Activated naive CD4-positive, alpha-beta T cell treated with anti-CD3 and anti-CD28 coated beads, Interleukin-2, amount 10 ng/mL, durations not matched to agents 7 days and 5 days (primary cell): ENCODE measurements at regions of chr5 and their contacts with region 1.

Region 1: DNA sequence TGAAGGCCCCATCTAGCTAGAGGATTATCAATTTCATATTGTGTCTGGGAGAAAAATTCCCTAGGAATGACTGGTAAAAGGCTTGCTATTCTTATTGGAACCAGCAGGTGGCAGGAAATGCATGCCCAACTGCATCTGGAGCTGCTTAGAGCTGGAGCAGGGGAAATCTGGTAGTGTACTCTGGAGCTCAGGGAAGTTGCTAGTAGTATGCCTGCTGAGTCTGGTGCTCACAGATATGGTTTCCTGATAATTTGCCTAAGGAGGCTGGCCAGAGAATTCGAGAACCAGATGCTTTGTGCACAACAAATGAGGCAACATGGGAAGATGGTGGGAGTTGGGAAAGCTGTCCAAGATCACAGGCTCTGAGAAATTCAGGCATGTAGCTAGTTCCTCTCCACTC is 53.7 kb downstream of the G3BP1 start:
- DNase-seq: peak; percentile 52
- H3K4me3 Mint-ChIP-seq: no peak overlapping the region
- H3K27ac Mint-ChIP-seq: no peak overlapping the region
- H3K4me1 Mint-ChIP-seq: peaks cover 5% of the 10 kb centered on the region
- H3K27me3 Mint-ChIP-seq: no peaks in the 10 kb centered on the region

Region 2: GRCh38 chr5:151779636-151780035 is 45.8 kb before region 1 on chr5:
- CTCF ChIA-PET with region 1: no interaction called
- DNase-seq: no peak
- H3K4me3 Mint-ChIP-seq: no peak overlapping the region
- H3K27ac Mint-ChIP-seq: no peak overlapping the region
- H3K4me1 Mint-ChIP-seq: peaks cover 58% of the 10 kb centered on the region
- H3K27me3 Mint-ChIP-seq: no peaks in the 10 kb centered on the region

Region 3: GRCh38 chr5:151811593-151812321 is 13.7 kb before region 1 on chr5:
- CTCF ChIA-PET with region 1: interaction called, 11 read pairs
- DNase-seq: no peak
- H3K4me3 Mint-ChIP-seq: no peak overlapping the region
- H3K27ac Mint-ChIP-seq: peak overlapping the region; percentile 3
- H3K4me1 Mint-ChIP-seq: no peaks in the 10 kb centered on the region
- H3K27me3 Mint-ChIP-seq: no peaks in the 10 kb centered on the region

Region 4: GRCh38 chr5:152142840-152143469 is 317.5 kb after region 1 on chr5:
- CTCF ChIA-PET with region 1: interaction called, 168 read pairs
- DNase-seq: peak; percentile 76
- H3K4me3 Mint-ChIP-seq: no peak overlapping the region
- H3K27ac Mint-ChIP-seq: no peak overlapping the region
- H3K4me1 Mint-ChIP-seq: no peaks in the 10 kb centered on the region
- H3K27me3 Mint-ChIP-seq: peaks cover 5% of the 10 kb centered on the region

Region 5: GRCh38 chr5:152349683-152350526 is 524.5 kb after region 1 on chr5:
- CTCF ChIA-PET with region 1: interaction called, 23 read pairs
- DNase-seq: peak; percentile 56
- H3K4me3 Mint-ChIP-seq: no peak overlapping the region
- H3K27ac Mint-ChIP-seq: no peak overlapping the region
- H3K4me1 Mint-ChIP-seq: no peaks in the 10 kb centered on the region
- H3K27me3 Mint-ChIP-seq: no peaks in the 10 kb centered on the region

Region 6: GRCh38 chr5:152505442-152506042 is 680.1 kb after region 1 on chr5:
- CTCF ChIA-PET with region 1: interaction called, 10 read pairs
- DNase-seq: peak; percentile 60
- H3K4me3 Mint-ChIP-seq: no peak overlapping the region
- H3K27ac Mint-ChIP-seq: no peak overlapping the region
- H3K4me1 Mint-ChIP-seq: no peaks in the 10 kb centered on the region
- H3K27me3 Mint-ChIP-seq: peaks cover 4% of the 10 kb centered on the region